A673 (cell line): ENCODE measurements at regions of chr6 and their contacts with region 1.

Region 1: DNA sequence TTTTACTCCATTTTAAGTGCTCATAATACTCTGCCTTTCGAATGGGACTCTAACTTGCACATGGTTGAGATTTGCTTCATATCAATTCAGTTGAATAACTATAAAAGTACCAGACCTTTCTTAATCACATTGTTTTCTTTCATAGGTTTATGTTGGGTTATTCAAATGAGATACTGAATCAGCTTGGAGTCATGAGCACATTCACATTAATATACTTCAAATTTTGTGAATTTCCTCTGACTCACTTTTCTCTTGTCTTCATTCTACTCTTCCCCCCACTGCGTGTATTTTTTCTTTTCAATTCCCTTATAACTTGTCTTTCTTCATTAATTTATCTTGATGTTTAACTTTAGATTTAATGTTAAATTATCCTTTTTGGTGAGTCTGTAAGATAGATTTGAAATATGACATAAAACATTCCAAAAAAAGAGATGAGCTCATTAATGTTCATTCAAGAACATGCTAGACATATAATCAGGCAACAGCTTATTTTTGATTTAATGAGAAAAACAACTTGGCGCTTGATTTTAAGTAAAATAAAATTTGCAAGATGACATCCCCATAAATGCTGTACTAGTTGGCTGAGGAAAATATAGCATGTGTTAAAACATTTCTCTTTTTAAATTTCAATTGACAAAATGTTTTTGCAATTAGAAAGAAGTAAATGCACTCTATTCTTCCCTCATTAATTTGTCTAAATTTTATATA is 736.0 kb downstream of the CD109 start:
- DNase-seq: no peak
- H3K4me3 ChIP-seq: no peak overlapping the region
- H3K27ac ChIP-seq: no peak overlapping the region
- H3K4me1 ChIP-seq: no peaks in the 10 kb centered on the region
- H3K27me3 ChIP-seq: no peaks in the 10 kb centered on the region
- CTCF ChIP-seq: no peak

Region 2: DNA sequence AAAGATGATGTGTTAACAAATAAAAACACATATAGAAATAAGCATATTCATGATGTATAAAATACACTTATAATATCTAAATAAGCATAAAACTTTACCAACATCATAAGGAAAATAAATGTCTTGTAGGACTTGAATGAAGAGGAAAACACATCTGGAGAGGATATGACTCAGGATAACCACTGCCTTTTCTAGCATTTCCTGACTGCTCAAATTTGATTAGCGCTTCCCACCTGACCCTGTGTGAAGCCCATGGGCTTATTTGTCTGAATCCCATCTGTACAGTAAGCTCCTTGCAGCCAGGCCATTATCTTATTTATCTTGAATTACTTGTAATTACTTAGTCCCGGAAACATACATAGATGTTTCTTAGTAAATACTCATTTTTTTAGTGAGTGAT is 165.2 kb after region 1 on chr6:
- CTCF ChIA-PET with region 1: no interaction called
- POLR2A ChIA-PET with region 1: interaction called, 12 read pairs
- intact Hi-C with region 1: no loop called
- DNase-seq: peak; percentile 62
- H3K4me3 ChIP-seq: no peak overlapping the region
- H3K27ac ChIP-seq: no peak overlapping the region
- H3K4me1 ChIP-seq: peaks cover 4% of the 10 kb centered on the region
- H3K27me3 ChIP-seq: no peaks in the 10 kb centered on the region
- CTCF ChIP-seq: no peak